Activated CD4-positive, alpha-beta memory T cell treated with anti-CD3 and anti-CD28 coated beads, Interleukin-2, amount 10 ng/mL, durations not matched to agents 7 days and 5 days (primary cell): ENCODE measurements at regions of chr20 and their contacts with region 1.

Region 1: GRCh38 chr20:58692594-58693226 is at the start of gene NPEPL1:
- DNase-seq: peak; percentile 69
- H3K4me3 Mint-ChIP-seq: peak within 1 kb of the TSS; percentile 76
- H3K27ac Mint-ChIP-seq: peak within 1 kb of the TSS; percentile 56
- H3K4me1 Mint-ChIP-seq: peaks cover 23% of the 10 kb centered on the region
- H3K27me3 Mint-ChIP-seq: no peaks in the 10 kb centered on the region
- total RNA-seq, gene NPEPL1: 29.1 to 30.7 TPM

Region 2: DNA sequence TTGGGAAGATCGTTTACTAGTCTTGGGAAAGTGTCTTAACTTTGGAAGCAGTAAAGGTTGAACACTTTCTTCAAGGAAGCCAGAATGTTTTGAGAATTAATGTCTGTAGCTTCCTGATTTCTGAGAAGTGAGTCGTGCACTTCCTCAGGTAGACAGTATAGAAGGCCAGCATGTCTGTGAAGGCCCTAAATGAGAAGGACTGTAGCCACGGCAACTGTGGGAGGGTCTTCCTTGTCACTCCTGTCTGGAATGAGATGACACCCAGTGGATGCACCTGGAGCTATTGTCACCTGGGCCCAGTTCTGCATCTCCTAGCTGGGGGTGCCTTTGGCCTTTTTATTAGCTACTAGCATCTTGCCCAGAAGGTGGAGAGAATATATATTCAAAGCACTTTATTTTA is 32.9 kb before region 1 on chr20:
- CTCF ChIA-PET with region 1: interaction called, 12 read pairs
- POLR2A ChIA-PET with region 1: interaction called, 7 read pairs
- DNase-seq: peak; percentile 38
- H3K4me3 Mint-ChIP-seq: peak overlapping the region; percentile 59
- H3K27ac Mint-ChIP-seq: peak overlapping the region; percentile 81
- H3K4me1 Mint-ChIP-seq: peaks cover 82% of the 10 kb centered on the region
- H3K27me3 Mint-ChIP-seq: no peaks in the 10 kb centered on the region

Region 3: DNA sequence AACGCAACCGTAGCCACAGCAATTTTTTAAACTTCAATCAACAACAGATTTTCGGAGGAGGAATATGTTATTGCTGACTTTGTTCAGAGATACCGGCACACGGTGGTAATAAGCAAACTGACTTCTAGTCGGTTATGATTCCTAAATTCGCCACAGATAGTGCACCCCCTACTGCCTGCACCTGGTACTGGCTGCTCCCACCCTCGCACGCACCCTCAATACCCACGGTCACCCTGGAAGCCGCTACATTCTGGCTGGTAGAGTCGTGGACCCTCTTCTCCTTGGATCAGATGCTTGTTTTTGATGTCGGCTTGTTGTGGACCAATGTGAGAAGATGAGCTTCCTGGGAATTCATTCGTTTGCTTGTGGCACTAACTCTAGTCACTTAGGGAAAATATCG is 10.6 kb after region 1 on chr20:
- CTCF ChIA-PET with region 1: no interaction called
- POLR2A ChIA-PET with region 1: no interaction called
- DNase-seq: no peak
- H3K4me3 Mint-ChIP-seq: no peak overlapping the region
- H3K27ac Mint-ChIP-seq: no peak overlapping the region
- H3K4me1 Mint-ChIP-seq: peaks cover 7% of the 10 kb centered on the region
- H3K27me3 Mint-ChIP-seq: no peaks in the 10 kb centered on the region